Cardiac septum (tissue), 1 donor: ENCODE measurements at regions of chr11 and their contacts with region 1.

Region 1: GRCh38 chr11:34585735-34586487 is 35.0 kb upstream of the EHF start:
- DNase-seq: no peak

Region 2: DNA sequence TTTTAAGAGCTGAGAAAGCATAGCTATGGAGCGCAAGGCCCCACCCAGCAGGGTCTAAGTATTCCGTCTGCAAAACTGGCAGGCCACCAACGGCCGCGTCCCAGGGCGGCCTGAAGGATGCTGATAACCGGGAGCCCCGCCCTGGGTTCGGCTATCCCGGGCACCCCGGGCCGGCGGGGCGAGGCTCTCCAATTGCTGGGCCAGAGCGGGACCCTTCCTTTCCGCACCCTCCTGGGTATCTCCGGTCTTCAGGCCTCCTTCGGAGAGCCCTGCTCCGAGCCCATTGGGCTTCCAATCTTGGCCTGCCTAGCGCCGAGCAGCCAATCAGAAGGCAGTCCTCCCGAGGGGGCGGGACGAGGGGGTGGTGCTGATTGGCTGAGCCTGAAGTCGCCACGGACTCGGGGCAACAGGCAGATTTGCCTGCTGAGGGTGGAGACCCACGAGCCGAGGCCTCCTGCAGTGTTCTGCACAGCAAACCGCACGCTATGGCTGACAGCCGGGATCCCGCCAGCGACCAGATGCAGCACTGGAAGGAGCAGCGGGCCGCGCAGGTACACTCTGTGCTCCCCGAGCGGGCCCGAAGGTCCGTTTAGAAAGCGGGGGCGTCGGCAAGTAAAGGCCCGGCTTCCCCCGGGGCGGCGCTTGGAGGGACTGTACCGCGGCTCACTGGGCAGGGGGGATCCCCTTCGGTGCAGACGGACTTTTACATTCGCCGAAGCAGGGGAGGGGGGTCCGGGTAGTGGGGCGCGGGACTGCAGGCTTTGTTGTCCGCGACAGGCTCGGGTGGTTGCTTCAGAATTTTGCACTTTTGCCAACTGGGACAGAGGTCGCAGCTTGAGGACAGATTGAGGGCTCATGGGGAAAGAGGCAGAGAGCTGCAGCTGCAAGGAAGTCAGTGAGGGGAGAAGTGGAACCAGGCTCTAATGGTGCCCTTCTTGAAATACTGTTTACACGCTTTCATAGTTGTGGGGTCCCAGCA is 147.1 kb before region 1 on chr11 and contains the start of gene CAT:
- intact Hi-C with region 1: no loop called
- DNase-seq: peak; percentile 99
- total RNA-seq, gene CAT: 47.6 TPM

Region 3: DNA sequence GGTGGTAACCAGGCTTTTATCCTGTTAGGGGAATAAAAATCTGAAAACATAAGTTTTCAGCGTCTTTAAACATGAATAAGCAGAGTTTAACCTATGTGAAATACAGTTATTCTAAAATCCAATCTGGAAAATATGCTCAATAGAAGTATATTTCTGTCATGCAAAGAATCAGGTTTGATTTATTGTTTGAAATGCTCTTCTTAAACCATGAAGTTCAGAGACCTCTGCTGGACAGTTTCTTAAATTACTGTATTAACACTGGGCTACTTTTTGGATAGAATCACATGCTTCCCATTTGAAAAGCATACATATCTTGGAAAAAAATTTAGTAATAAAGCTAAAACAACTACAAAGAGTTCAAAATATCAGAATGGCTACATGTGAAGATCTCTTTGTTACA is 304.9 kb after region 1 on chr11:
- intact Hi-C with region 1: loop called (anchors 1 kb)
- DNase-seq: no peak

Region 4: DNA sequence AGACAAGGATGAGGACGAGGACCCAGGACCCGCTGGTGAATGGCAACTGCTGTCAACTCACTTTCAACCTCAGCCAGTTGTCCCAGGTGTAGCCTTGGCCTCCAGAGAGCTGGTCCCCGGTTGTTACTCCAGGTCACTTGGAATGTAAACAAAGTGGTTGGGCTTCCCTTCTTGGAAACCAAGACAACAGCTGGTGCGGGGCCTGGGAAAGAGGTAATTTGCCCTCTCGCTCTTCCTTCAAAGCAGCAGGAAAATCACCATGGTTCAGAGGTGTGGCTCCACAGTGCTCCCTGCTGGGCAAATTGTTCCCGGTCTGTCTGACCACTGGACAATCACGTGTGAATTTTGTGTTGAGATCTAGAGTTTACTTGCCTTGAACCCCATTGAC is 818.5 kb after region 1 on chr11:
- intact Hi-C with region 1: loop called (anchors 5 kb)
- DNase-seq: no peak